ENCODE measurements at regions of chr4 and their contacts with region 1.

Region 1: DNA sequence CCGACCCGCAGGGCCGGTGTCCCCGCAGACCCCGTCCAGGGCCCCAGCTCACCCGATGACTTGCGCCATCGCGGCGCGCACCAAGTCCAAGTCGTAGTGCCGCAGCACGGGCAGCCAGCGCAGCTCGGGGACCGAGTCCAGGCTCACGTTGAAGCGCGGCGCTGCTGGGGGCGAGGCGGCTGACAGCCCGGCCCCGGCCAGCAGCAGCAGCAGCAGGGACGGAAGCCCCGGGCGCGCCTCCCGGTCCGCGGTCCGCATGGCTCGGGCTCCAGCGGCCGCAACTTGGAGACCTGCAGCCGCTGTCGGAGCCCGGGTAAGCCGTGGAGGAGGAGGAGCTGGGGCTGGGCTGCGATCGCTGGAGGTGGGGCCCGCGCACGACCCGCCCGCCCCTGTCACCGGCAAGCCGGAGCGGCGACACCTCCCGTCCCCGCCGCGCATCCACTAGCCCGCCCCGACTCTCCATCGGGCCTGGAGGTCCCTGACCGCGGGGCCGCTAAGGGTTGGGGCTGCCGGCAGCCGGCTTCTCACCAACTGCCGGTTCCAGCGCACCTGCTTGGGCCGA is at the start of gene NAAA:
- DNase-seq: peak; percentile 51 to 93 (median 72)
- ATAC-seq: peak; percentile 83
- H3K4me3 ChIP-seq: peak within 1 kb of the TSS; percentile 86
- H3K4me3 Mint-ChIP-seq: peak within 1 kb of the TSS; percentile 100
- H3K27ac ChIP-seq: peak within 1 kb of the TSS; percentile 79 to 86
- H3K27ac Mint-ChIP-seq: peak within 1 kb of the TSS; percentile 95
- H3K4me1 ChIP-seq: peaks cover 20% of the 10 kb centered on the region
- H3K4me1 Mint-ChIP-seq: peaks cover 27% of the 10 kb centered on the region
- H3K27me3 ChIP-seq: no peaks in the 10 kb centered on the region
- H3K27me3 Mint-ChIP-seq: no peaks in the 10 kb centered on the region
- CTCF ChIP-seq: no peak
- total RNA-seq, gene NAAA: 32.6 to 33.3 TPM

Region 2: GRCh38 chr4:75831856-75832405 is 108.8 kb before region 1 on chr4:
- CTCF ChIA-PET with region 1: no interaction called
- POLR2A ChIA-PET with region 1: no interaction called
- intact Hi-C with region 1: no loop called
- DNase-seq: no peak
- ATAC-seq: no peak
- H3K4me3 ChIP-seq: no peak overlapping the region
- H3K4me3 Mint-ChIP-seq: no peak overlapping the region
- H3K27ac ChIP-seq: no peak overlapping the region
- H3K27ac Mint-ChIP-seq: no peak overlapping the region
- H3K4me1 ChIP-seq: no peaks in the 10 kb centered on the region
- H3K4me1 Mint-ChIP-seq: no peaks in the 10 kb centered on the region
- H3K27me3 ChIP-seq: no peaks in the 10 kb centered on the region
- H3K27me3 Mint-ChIP-seq: peaks cover 4% of the 10 kb centered on the region
- CTCF ChIP-seq: no peak

Region 3: DNA sequence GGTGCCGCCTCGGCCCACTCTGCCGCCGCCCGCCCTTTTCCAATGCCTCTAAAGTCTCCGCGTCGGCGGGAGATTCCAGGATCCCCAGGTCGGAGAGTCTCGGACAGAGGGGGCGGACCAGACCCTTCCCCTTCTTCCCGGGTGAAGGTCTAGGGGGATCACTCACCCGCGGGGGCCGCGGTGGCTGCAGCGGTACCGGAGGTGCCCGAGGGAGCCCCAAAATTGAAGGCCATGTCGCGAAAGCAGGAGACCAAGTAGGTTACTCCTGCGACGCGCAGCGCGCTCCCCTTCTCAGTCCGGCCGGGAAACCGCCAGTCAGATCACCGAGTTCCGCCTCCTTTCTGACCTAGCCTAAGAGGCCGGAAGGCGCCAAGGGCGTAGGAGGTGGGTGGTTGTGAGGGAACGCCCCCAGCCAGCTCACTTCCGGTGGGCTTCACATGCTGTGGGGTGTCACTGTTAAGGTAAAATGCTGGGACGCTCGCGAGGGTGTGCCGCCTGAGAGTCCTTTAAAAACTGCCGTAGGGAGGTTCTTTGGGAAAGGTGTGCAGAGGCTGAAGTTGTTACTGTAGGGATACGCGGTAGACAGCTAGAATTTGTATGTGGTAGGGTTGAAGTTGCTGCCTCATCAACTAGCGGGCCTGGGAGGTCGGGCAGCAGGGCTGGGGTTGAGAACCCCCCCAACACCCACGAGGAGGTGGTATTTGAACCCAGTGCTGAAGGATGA is 207.5 kb after region 1 on chr4 and contains the start of gene NUP54:
- CTCF ChIA-PET with region 1: no interaction called
- POLR2A ChIA-PET with region 1: interaction called, 12 read pairs
- intact Hi-C with region 1: loop called in 1 of 2 experiments (anchors 5 kb)
- DNase-seq: peak; percentile 90 to 97 (median 93)
- ATAC-seq: peak; percentile 97
- H3K4me3 ChIP-seq: peak within 1 kb of the TSS; percentile 95
- H3K4me3 Mint-ChIP-seq: peak within 1 kb of the TSS; percentile 99
- H3K27ac ChIP-seq: peak within 1 kb of the TSS; percentile 80 to 90
- H3K27ac Mint-ChIP-seq: peak within 1 kb of the TSS; percentile 92
- H3K4me1 ChIP-seq: peaks cover 15% of the 10 kb centered on the region
- H3K4me1 Mint-ChIP-seq: peaks cover 38% of the 10 kb centered on the region
- H3K27me3 ChIP-seq: no peaks in the 10 kb centered on the region
- H3K27me3 Mint-ChIP-seq: no peaks in the 10 kb centered on the region
- CTCF ChIP-seq: no peak
- total RNA-seq, gene NUP54: 94.1 to 108 TPM

Measured in CD4-positive, alpha-beta T cell (primary cell).